ENCODE measurements at regions of chrX and their contacts with region 1.

Region 1: GRCh38 chrX:133670383-133670782 is 255.1 kb upstream of the GPC4 start:
- DNase-seq: no peak
- H3K4me3 ChIP-seq: no peak overlapping the region
- H3K27ac ChIP-seq: no peak overlapping the region
- H3K27me3 ChIP-seq: peaks cover 0 to 87% (median 34%) of the 10 kb centered on the region in 45 donors
- CTCF ChIP-seq: peak; percentile 46 to 84 (median 71)

Region 2: GRCh38 chrX:132740316-132741123 is 929.9 kb before region 1 on chrX:
- intact Hi-C with region 1: loop called in 1 of 2 experiments (anchors 10 kb)
- DNase-seq: no peak
- H3K4me3 ChIP-seq: no peak overlapping the region
- H3K27ac ChIP-seq: no peak overlapping the region
- H3K27me3 ChIP-seq: peaks cover 0 to 93% (median 24%) of the 10 kb centered on the region in 45 donors
- CTCF ChIP-seq: peak; percentile 36 to 70 (median 52)

Region 3: DNA sequence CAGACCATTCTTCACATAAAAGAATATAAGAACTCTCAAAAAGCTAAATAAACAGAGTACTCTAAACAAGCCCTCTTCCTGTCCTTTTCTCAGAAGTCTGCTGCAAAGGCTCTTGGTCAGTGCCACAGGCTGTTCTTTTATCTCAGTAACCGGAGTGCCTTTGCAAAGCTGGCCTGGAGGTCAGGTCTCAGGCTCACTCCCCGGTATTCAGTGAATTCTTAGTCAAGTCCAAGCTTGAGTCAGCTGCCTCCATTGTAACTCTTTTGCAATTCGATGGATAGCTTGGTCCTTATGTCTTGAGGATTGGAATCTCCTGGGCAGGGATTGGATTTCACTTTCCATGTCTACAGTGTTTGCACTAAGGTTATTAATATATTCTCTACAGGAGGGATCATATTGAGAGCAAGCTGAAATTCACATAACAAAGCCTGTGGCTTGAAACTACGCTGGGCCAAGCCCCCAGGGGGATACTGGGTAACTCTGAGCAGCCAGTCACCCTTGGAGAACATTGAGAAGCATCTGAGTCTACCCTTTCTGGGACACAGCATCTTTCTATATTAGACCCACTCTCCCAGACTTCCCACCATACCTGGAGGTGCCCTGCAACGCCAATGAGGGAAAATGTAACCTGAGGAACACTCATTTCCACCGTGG is 702.0 kb before region 1 on chrX:
- intact Hi-C with region 1: loop called in 1 of 2 experiments (anchors 10 kb)
- DNase-seq: no peak
- H3K4me3 ChIP-seq: no peak overlapping the region
- H3K27ac ChIP-seq: no peak overlapping the region
- H3K27me3 ChIP-seq: peaks cover 0 to 95% (median 29%) of the 10 kb centered on the region in 45 donors
- CTCF ChIP-seq: no peak

Region 4: DNA sequence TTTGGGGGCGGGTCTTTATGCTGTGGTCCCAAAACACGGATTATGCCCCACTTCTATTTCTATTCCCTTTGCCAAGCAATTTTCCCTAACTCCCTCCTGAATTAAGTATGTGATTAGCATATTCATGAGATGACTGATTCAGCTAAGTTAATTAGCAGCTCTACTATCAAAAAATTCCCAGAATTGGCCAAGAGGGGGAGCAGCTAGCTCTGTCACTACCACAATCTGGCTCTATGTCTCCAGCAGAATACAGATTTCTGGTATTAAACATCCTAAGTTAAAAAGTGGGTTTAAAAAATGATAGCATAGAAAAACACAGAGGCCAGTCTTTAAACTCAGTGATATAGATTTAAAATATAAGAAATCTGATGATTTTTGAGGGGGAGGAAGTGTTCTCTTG is 335.4 kb before region 1 on chrX:
- intact Hi-C with region 1: loop called (anchors 10 kb)
- DNase-seq: peak in 1 of 10 donors; percentile 19
- H3K4me3 ChIP-seq: no peak overlapping the region
- H3K27ac ChIP-seq: no peak overlapping the region
- H3K27me3 ChIP-seq: peaks cover 0 to 83% (median 15%) of the 10 kb centered on the region in 45 donors
- CTCF ChIP-seq: peak in 55 of 56 donors; percentile 21 to 70 (median 54)

Region 5: GRCh38 chrX:133346026-133346425 is 324.4 kb before region 1 on chrX:
- intact Hi-C with region 1: loop called in 1 of 2 experiments (anchors 10 kb)
- DNase-seq: no peak
- H3K4me3 ChIP-seq: no peak overlapping the region
- H3K27ac ChIP-seq: no peak overlapping the region
- H3K27me3 ChIP-seq: peaks cover 0 to 82% (median 39%) of the 10 kb centered on the region in 45 donors
- CTCF ChIP-seq: no peak